Posterior vena cava (tissue), 2 donors: ENCODE measurements at regions of chr4 and their contacts with region 1.

Region 1: DNA sequence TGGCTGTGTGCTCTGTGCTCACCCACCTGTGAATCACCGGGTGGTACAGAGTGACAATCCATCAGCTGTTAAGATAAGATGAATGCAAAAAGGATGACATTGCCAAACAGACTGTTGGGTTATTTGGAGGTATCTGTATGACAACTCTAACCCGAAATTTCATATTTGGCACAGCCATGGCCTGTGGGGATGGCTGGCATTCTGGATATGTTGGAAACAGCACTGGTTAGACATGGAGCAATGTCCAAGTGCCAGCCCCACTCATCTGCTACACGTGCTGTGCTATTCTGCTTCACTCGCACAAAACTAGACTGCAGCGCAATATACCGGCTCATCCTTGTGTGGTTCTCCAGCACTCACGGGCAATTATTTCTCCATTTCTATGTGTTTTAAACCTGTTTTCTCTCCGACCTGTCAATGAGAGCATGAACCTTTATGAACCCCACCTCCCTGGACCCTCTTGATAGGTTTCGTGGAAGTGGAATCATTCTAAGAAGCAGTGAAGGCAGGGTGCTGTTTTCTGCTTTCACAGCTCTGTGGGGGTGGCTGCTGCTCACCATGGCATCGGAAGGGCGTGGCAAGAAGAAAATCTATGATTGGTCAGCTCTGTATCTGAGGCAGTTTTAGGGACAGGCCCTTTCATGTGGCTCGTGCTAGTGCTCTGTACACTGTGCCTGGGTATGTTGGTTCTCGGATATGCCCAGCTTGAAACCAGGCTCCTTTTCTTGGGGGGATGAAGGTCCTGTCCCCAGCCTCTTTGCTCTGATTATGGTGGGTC is 94.9 kb downstream of the ENPP6 start:
- DNase-seq: peak; percentile 14

Region 2: GRCh38 chr4:182585321-182585720 is 1537.5 kb before region 1 on chr4:
- intact Hi-C with region 1: loop called in 1 of 2 experiments (anchors 10 kb)
- DNase-seq: no peak

Region 3: GRCh38 chr4:183438458-183439113 is 684.2 kb before region 1 on chr4:
- intact Hi-C with region 1: no loop called
- DNase-seq: no peak

Region 4: GRCh38 chr4:184143770-184144564 is 21.1 kb after region 1 on chr4:
- intact Hi-C with region 1: no loop called
- DNase-seq: no peak

Region 5: DNA sequence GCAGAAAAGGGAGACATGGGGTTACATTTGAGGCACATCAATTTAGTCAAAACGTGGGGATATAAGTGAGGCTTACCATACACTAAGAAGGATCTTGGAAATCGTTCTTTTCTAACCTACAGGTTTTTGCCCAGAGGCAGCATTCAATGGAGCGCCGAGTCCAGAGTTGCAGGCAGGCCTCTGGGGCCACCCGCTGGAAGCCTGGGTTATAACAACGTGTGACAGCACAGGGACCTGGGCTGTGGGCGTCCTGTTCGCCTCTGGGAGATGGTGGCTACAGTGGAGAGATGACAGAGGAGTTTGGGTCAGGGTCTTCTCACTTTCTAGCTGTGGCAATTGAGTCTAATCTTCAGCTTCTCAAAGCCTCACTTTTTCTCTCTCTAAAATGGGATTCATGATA is 41.0 kb after region 1 on chr4:
- intact Hi-C with region 1: no loop called
- DNase-seq: no peak

Region 6: GRCh38 chr4:184250795-184251669 is 128.2 kb after region 1 on chr4:
- intact Hi-C with region 1: no loop called
- DNase-seq: no peak